ENCODE measurements at regions of chr17 and their contacts with region 1.

Region 1: GRCh38 chr17:49715717-49716279 is 8.0 kb upstream of the SLC35B1 start:
- DNase-seq: peak in 7 of 14 experiments; percentile 20 to 85 (median 39)
- ATAC-seq: peak; percentile 72
- H3K4me3 ChIP-seq: no peak overlapping the region
- H3K4me3 Mint-ChIP-seq: peak overlapping the region; percentile 58
- H3K27ac ChIP-seq: peak overlapping the region; percentile 62 to 86
- H3K27ac Mint-ChIP-seq: peak overlapping the region; percentile 80
- H3K4me1 ChIP-seq: peaks cover 49% of the 10 kb centered on the region
- H3K4me1 Mint-ChIP-seq: peaks cover 34% of the 10 kb centered on the region
- H3K27me3 ChIP-seq: no peaks in the 10 kb centered on the region
- H3K27me3 Mint-ChIP-seq: no peaks in the 10 kb centered on the region
- CTCF ChIP-seq: no peak

Region 2: DNA sequence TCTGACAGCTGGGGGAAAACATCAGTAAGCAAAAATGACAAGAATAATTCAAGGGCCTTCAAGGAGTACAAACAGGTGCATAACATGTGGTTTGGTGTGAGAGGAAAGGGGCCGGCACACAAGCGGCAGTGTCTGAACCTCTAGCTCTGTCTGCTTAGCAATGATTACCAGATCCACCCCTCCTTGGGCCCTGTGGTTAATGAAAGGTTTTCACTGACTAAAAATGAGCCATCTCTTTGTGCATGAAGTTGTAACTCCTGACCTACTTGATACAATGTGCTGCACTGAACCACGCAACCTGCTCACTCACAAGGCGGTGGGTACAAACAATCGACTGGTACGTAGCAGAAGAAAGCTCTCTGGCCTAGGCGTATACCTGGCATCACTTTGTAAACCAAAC is 33.0 kb after region 1 on chr17:
- CTCF ChIA-PET with region 1: interaction called, 6 read pairs
- POLR2A ChIA-PET with region 1: interaction called, 16 read pairs
- intact Hi-C with region 1: no loop called
- DNase-seq: peak; percentile 25 to 87 (median 52)
- ATAC-seq: peak; percentile 76
- H3K4me3 ChIP-seq: no peak overlapping the region
- H3K4me3 Mint-ChIP-seq: peak overlapping the region; percentile 72
- H3K27ac ChIP-seq: peak overlapping the region; percentile 87 to 94
- H3K27ac Mint-ChIP-seq: peak overlapping the region; percentile 97
- H3K4me1 ChIP-seq: peaks cover 90% of the 10 kb centered on the region
- H3K4me1 Mint-ChIP-seq: peaks cover 77% of the 10 kb centered on the region
- H3K27me3 ChIP-seq: no peaks in the 10 kb centered on the region
- H3K27me3 Mint-ChIP-seq: no peaks in the 10 kb centered on the region
- CTCF ChIP-seq: no peak